RWPE1 (cell line): ENCODE measurements at regions of chr5 and their contacts with region 1.

Region 1: DNA sequence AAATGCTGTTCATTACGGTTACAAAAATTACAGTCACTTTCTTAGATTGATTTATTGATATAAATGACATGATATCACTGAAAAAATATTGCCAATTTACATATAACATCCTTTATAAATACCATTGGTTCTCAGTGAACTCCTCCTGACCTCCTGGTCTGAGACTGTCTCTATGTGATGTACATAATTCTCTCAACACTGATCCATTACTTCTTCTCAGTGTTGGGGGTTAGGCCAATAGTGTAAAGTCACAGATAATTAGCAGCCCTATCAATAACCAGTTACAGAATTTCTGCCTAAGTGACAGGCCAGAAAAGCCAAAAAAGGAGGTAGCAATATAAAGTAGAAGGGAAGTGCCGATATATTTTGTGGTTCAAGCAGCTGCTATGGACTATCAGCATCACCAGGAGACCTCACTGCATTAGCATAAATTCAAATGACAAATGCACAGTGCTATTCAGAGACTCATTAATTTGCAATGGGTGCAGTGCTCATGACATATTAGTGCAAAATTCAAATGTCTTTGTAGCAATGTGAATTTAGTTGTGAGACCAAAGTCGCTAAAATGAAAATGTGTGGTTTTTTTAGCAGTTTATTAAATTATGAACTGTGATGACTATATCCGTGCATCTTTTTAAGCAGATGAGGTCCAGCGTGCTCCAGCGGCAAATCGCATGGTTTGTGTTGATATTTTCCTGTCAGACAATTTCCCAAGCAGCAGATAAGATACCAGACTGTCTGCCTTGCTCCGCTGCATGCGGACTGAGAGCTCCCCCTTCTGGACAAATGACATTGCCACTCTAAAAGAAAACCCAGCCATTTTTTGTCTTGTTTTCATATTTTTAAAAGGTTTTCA is 144.6 kb downstream of the CETN3 start:
- DNase-seq: peak; percentile 50
- H3K27ac ChIP-seq: no peak overlapping the region
- CTCF ChIP-seq: peak; percentile 99

Region 2: DNA sequence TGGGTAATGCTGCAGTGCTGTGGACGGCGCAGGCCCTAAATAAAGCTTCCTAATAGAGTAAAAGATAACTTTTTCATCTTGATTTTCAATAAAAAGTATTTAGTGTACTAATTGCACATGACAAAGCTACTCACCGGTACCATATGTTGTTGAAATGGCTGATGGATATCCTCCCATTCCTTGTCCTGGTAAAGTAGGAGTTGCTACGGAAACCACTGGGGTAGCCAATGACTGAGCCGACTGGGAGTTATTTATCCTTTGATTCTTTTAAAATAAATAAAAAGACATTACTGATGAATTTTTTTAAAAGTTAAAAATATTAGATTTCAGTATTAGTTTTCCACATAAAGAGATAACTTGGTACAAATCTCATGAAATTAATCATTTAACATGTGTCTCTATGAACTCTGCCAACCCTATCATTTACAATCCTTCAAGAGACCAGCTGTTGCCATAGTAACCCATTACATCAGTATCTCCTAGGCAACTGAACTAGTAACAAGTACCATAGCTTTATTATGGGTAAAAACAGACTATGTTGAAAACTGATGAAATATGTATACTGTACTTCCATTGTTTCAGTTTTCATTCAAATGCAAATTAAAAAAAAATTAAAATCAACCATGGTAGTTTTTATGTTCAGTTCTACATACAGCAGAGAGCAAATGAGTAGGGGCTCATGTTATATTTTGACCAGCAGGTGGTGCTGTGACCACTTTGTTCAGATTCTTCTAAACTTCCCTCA is 1535.7 kb before region 1 on chr5:
- CTCF ChIA-PET with region 1: interaction called, 17 read pairs
- POLR2A ChIA-PET with region 1: no interaction called
- DNase-seq: peak; percentile 67
- H3K27ac ChIP-seq: no peak overlapping the region
- CTCF ChIP-seq: peak; percentile 89

Region 3: DNA sequence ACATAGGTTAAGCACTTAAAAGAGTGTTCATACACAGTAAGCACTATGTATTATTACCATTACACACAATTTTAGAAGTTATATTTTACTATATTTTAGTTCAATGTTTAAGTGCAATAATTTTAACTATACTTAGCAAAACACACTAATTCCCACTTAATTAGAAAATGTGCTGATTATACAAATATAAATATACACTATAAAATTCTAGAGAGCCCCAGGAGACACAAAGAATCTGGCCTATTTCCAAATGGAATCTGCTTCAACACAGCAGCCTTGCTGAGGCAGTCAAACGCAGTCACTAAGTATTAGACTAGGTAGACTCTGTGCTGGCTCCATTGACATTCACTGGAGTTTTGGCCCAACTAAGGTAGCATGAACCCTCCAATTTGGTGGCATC is 16.3 kb before region 1 on chr5:
- CTCF ChIA-PET with region 1: no interaction called
- POLR2A ChIA-PET with region 1: no interaction called
- DNase-seq: no peak
- H3K27ac ChIP-seq: no peak overlapping the region
- CTCF ChIP-seq: no peak

Region 4: GRCh38 chr5:90293931-90294330 is 29.0 kb after region 1 on chr5:
- CTCF ChIA-PET with region 1: no interaction called
- POLR2A ChIA-PET with region 1: no interaction called
- DNase-seq: no peak
- H3K27ac ChIP-seq: no peak overlapping the region
- CTCF ChIP-seq: no peak